Common myeloid progenitor, CD34-positive (primary cell): ENCODE measurements at regions of chr11 and their contacts with region 1.

Region 1: DNA sequence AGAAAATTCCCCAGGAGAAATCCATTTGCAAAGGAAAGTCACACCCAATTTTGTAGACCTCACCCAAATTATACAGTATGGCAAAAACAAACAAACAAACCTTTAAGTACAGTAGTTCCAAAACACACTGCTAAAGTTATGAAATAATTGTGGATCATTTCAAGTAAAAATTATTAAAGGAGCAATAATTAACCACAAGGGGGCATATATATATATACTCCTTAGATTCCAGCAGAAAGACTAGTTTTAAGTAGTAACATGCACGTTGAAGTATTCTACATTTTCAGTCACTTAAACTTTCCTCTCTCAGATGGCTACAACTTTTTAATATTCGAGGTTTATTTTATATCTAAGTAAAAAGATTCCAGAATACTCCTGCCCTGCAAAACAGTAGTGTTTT is 26.8 kb downstream of the RNF141 start:
- DNase-seq: peak in 2 of 3 donors; percentile 51 to 53
- H3K4me3 ChIP-seq: no peak overlapping the region
- H3K27ac ChIP-seq: no peak overlapping the region
- H3K4me1 ChIP-seq: no peaks in the 10 kb centered on the region
- H3K27me3 ChIP-seq: no peaks in the 10 kb centered on the region

Region 2: GRCh38 chr11:10405855-10406592 is 108.2 kb before region 1 on chr11:
- CTCF ChIA-PET with region 1: interaction called, 15 read pairs
- POLR2A ChIA-PET with region 1: no interaction called
- DNase-seq: peak; percentile 86 to 88 (median 87)
- H3K4me3 ChIP-seq: no peak overlapping the region
- H3K27ac ChIP-seq: no peak overlapping the region
- H3K4me1 ChIP-seq: peaks cover 4 to 62% (median 46%) of the 10 kb centered on the region in 4 experiments
- H3K27me3 ChIP-seq: no peaks in the 10 kb centered on the region

Region 3: DNA sequence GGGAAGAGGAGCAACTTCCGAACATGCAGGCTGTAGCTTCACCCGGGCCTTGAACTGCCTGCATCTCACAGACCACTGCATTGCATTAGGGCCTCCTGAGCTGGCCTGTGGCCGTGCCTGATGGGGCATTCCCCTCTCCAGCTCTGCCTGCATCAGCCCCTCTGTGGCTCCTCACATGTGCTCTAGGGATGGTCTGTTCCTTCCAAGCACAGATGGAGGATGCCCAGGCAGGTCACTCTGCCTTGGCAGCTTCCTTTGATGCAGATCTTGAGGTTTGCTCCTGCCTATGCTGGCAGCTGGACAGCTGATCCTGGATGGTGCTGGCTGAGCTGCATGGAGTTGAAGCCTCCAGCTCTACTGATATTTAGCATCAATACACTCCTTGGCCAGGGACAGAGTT is 30.6 kb before region 1 on chr11:
- CTCF ChIA-PET with region 1: no interaction called
- POLR2A ChIA-PET with region 1: no interaction called
- DNase-seq: no peak
- H3K4me3 ChIP-seq: no peak overlapping the region
- H3K27ac ChIP-seq: no peak overlapping the region
- H3K4me1 ChIP-seq: no peaks in the 10 kb centered on the region
- H3K27me3 ChIP-seq: no peaks in the 10 kb centered on the region

Region 4: GRCh38 chr11:10534316-10534715 is 20.1 kb after region 1 on chr11:
- CTCF ChIA-PET with region 1: interaction called, 17 read pairs
- POLR2A ChIA-PET with region 1: no interaction called
- DNase-seq: peak in 2 of 3 donors; percentile 78 to 87
- H3K4me3 ChIP-seq: no peak overlapping the region
- H3K27ac ChIP-seq: no peak overlapping the region
- H3K4me1 ChIP-seq: peaks cover 6 to 26% (median 14%) of the 10 kb centered on the region in 4 experiments
- H3K27me3 ChIP-seq: no peaks in the 10 kb centered on the region